GM10248 (cell line): ENCODE measurements at regions of chr17 and their contacts with region 1.

Region 1: DNA sequence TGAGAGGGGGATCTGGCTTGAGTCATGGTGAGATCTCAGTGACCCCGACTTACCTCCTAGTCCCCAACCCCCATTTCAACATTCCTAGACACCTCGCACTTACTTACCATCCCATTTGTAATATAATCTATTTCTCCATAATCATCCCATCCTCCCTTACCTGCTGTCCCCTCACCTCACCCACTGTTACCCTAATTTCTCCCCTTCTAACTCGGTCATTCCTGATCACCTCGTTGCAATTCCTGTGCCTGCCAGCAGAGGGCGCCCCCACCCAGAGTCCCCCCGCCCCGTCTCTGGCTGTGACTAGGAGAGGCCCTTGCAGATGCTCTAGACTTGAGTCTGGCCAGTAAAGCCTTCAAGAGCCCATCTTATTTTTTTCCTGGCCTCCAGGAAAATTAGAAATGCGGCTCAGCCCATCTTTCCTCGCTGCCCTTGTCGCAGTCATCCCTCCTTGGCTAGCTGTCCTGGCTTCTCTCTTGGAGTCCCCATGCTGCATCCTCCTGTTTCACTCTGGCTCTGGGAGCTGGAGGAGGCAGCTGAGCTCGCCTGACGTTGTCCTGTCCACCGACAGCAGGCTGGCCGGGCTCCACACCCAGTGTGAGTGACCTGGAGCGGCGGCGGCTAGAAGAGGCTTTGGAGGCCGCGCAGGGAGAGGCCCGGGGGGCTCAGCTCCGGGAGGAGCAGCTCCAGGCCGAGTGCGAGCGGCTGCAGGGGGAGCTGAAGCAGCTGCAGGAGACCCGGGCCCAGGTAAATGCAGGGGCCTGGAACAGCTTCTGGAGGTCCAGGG is 5.0 kb downstream of the TBKBP1 start:
- DNase-seq: peak; percentile 91
- CTCF ChIP-seq: peak; percentile 86

Region 2: GRCh38 chr17:47687748-47688147 is 11.2 kb before region 1 on chr17:
- CTCF ChIA-PET with region 1: interaction called, 41 read pairs
- POLR2A ChIA-PET with region 1: no interaction called
- DNase-seq: no peak
- CTCF ChIP-seq: no peak

Region 3: GRCh38 chr17:47717261-47717697 is 18.3 kb after region 1 on chr17:
- CTCF ChIA-PET with region 1: interaction called, 85 read pairs
- POLR2A ChIA-PET with region 1: no interaction called
- DNase-seq: no peak
- CTCF ChIP-seq: peak; percentile 54

Region 4: GRCh38 chr17:47742319-47743181 is 43.6 kb after region 1 on chr17:
- CTCF ChIA-PET with region 1: interaction called, 15 read pairs
- POLR2A ChIA-PET with region 1: no interaction called
- DNase-seq: peak; percentile 57
- CTCF ChIP-seq: peak; percentile 33

Region 5: DNA sequence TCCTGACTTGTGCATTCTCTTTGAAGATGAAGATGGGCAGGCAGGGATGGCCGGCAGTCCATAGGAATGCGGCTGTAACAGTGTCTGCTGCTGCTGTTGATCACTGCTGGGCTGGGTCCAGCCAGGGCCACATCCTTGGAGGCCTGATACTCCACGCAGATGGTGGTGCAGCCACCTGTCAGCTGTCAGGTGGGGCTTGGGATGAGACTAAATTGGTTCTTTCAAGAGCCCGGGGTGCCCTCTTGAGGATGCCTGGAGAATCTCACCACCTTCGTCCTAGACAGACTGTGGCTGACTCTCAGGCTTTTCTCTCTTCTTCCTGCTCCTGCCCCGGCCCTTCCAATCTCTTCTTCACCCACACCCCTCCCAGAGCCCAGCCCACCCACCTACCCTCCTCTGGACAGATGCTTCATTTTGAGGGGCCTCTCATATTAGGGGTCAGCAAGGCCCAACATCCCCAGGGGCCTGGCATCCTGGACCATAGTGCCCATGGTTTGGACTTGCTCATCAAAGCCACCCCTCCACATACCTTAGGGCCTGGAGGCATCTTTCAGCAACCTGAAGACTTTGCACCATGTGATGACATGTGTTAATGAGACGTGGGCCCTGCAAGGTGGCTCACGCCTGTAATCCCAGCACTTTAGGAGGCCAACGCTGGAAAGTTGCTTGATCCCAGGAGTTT is 103.5 kb after region 1 on chr17:
- CTCF ChIA-PET with region 1: interaction called, 10 read pairs
- POLR2A ChIA-PET with region 1: no interaction called
- DNase-seq: peak; percentile 84
- CTCF ChIP-seq: peak; percentile 66

Region 6: DNA sequence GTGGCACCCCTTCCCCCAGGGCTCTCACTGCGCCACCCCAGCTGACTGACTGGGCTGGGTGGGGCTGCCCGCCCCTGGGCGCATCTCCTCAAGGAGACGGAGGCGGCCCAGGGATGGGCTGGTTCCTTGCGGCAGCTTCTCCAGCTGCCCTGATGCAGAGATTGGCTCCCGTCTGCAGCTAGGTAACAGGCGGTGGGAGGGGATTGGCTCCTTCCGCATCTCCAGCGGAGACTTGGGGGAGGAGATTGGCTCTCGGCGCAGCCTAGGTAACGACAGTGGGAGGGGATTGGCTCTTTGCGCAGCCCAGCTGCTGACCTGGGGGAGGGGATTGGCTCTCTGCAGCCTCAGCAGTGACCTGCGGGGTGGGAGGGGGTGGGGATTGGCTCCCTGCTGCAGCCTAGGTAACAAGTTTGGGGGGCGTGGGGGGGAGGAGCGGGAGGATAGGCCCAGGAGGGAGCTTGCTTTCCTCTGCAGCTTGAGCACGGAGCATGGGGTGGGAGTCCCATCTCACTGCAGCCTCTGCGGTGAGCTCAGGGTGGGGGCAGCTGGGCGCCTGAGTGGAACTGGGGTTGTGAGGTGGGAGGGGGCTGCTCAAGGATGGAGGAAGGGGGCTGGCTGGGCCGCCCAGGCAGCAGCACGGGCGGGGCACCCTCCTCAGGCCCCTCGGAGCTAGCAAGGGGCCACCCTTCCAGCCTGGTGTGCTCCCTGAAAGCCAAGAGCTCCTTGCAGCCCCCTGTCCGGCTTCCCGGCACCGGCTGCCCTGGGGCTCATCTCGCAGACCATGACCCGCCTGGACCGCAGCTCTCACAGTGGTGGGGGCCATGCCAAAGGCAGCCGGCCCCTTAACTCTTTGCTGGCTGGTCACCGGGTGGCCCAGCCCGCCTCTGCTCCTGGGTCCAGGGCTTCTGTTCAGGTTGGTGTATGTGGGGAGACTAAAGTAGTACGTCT is 355.6 kb after region 1 on chr17:
- CTCF ChIA-PET with region 1: no interaction called
- POLR2A ChIA-PET with region 1: no interaction called
- DNase-seq: no peak
- CTCF ChIP-seq: no peak